ENCODE measurements at regions of chr17 and their contacts with region 1.

Region 1: GRCh38 chr17:41082626-41083025 is 1.3 kb upstream of the KRTAP4-7 start:
- DNase-seq: no peak
- ATAC-seq: no peak
- H3K4me3 ChIP-seq: no peak overlapping the region
- H3K4me3 Mint-ChIP-seq: no peak overlapping the region
- H3K27ac ChIP-seq: no peak overlapping the region
- H3K27ac Mint-ChIP-seq: no peak overlapping the region
- H3K4me1 ChIP-seq: no peaks in the 10 kb centered on the region
- H3K4me1 Mint-ChIP-seq: no peaks in the 10 kb centered on the region
- H3K27me3 ChIP-seq: peaks cover 2 to 3% of the 10 kb centered on the region in 2 experiments
- H3K27me3 Mint-ChIP-seq: peaks cover 7 to 16% of the 10 kb centered on the region in 2 donors

Region 2: GRCh38 chr17:40364121-40364861 is 718.3 kb before region 1 on chr17 and contains the start of gene GJD3:
- CTCF ChIA-PET with region 1: no interaction called
- POLR2A ChIA-PET with region 1: interaction called in 1 of 2 experiments, 17 read pairs
- DNase-seq: no peak
- ATAC-seq: no peak
- H3K4me3 ChIP-seq: peak within 1 kb of the TSS in 1 of 2 donors; percentile 9
- H3K4me3 Mint-ChIP-seq: peak within 1 kb of the TSS; percentile 62 to 66 (median 63)
- H3K27ac ChIP-seq: no peak within 1 kb of the TSS
- H3K27ac Mint-ChIP-seq: no peak within 1 kb of the TSS
- H3K4me1 ChIP-seq: peaks cover 0 to 16% of the 10 kb centered on the region in 2 experiments
- H3K4me1 Mint-ChIP-seq: peaks cover 0 to 10% (median 10%) of the 10 kb centered on the region in 3 donors
- H3K27me3 ChIP-seq: peaks cover 0 to 42% of the 10 kb centered on the region in 2 experiments
- H3K27me3 Mint-ChIP-seq: peaks cover 13 to 14% of the 10 kb centered on the region in 2 donors
- total RNA-seq, gene GJD3: not detected